HEK293T (cell line): ENCODE measurements at regions of chr12 and their contacts with region 1.

Region 1: GRCh38 chr12:114625294-114625851 is 58.6 kb downstream of the TBX3 start:
- DNase-seq: peak; percentile 61

Region 2: DNA sequence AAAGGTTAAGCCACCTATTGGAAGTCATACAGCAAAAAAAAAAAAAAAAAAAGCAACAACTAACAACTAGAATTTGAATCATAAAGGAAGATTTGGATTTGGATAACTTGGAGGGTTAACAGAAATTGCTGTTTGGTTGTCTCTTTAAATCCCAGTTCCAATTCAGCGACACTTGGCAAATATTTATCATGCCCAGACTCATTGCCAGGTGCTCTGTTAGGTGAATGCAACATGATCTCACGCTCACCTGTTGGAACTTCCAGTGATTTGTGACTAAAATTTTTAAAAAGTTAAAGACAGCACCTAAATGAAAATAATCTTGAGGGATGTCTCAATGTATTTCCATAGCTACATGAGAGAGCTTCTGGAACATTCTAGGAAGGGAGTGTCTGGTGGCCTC is 45.1 kb before region 1 on chr12:
- CTCF ChIA-PET with region 1: no interaction called
- POLR2A ChIA-PET with region 1: no interaction called
- DNase-seq: no peak

Region 3: GRCh38 chr12:114636723-114637483 is 11.5 kb after region 1 on chr12:
- CTCF ChIA-PET with region 1: interaction called, 11 read pairs
- POLR2A ChIA-PET with region 1: no interaction called
- DNase-seq: peak; percentile 45

Region 4: DNA sequence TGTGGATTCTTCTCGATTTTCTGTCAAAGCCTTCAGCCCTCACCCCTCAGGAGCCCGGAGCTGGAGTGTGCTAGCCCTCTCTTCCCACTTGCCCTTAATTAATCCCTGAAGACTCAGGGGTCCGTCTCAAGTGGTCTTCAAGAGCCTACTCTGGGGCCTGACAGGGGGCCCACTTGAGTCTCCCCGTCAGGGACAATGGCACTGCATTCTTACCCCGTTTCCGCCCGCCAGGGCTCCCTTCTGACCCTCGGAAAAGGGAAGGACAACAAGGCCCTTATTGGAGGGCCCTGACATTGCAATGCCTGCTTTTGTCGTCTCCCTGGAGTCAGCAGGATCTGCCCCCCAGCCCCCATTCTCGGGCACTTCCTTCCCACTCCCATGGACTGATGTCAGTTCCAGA is 24.2 kb after region 1 on chr12:
- CTCF ChIA-PET with region 1: interaction called, 13 read pairs
- POLR2A ChIA-PET with region 1: no interaction called
- DNase-seq: no peak